Activated CD4-positive, alpha-beta T cell treated with anti-CD3 and anti-CD28 coated beads, Interleukin-2, amount 10 ng/mL, durations not matched to agents 7 days and 5 days (primary cell): ENCODE measurements at regions of chr22 and their contacts with region 1.

Region 1: DNA sequence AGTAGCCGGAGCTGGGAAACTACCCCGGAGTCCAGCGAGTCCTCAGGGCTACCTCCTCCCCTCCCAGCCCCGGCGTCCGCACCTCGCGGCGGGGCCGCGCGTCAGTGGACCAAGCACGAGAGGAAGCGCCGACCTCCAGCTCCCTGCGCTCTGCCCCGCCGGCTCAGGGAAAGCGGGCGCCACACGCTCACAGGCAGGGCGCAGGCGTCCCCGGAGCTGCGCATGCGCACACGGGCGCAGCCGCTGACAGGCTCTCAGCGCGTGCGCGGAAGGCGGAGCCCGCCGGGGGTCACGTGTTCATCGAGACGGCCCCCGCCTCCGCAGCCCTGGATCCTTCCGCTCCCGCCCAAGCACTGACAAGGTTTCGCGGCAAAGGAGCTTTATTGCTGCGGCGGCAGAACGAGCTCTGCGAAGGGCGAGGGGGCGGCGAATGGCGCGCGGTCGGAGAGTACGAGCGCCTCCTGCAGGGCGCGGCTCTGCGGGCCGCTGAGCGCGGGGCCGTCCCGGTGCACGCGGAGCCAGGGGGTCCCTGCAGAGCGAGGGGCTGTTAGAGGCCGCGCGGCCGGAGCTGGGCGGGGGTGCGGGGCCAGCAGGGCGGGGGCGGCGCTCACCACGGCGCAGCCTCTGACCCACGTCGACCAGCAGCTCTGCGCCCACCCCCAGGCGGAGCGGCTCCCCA is at the start of gene SCO2:
- DNase-seq: peak; percentile 97
- H3K4me3 Mint-ChIP-seq: peak within 1 kb of the TSS; percentile 80
- H3K27ac Mint-ChIP-seq: peak within 1 kb of the TSS; percentile 93
- H3K4me1 Mint-ChIP-seq: peaks cover 37% of the 10 kb centered on the region
- H3K27me3 Mint-ChIP-seq: no peaks in the 10 kb centered on the region
- total RNA-seq, gene SCO2: 2.8 to 10.5 TPM

Region 2: DNA sequence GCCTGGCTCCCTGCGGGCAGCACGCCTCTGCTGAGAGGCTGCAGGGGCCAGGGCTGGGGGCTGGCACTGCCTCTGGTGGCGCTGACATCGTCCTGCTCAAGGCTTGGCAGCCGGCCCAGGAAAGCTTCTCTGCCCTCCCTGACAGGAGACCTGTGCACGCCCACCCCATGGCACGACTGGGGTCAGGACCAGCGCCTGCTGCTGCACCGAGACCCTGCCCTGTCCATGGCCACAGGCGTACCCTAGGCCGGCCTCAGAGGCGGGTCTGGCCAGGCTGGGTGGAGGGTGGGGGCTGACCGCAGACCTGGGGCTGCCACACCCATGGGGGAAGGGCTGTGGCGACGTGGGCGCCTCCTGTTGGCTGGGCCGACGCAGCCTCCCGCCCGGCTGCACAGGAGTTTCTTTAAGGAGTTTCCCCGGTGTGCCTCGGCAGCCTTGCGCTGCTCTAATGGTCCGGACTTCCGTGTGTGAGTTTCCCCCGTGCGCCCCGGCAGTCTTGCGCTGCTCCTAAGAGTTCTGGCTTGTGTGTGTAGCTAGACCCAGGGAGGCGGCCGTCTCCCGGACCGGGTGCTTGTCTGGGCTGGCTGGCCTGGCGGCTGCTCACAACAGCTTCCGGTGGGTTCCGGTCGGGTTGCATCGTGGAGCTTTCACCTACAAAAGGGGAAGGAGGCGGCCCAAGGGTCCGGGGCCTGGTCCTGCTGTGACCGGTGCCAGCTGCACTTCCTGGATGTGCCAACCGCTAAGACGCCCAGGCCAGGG is 335.2 kb before region 1 on chr22:
- CTCF ChIA-PET with region 1: interaction called, 10 read pairs
- POLR2A ChIA-PET with region 1: no interaction called
- DNase-seq: peak; percentile 84
- H3K4me3 Mint-ChIP-seq: peak overlapping the region; percentile 81
- H3K27ac Mint-ChIP-seq: peak overlapping the region; percentile 97
- H3K4me1 Mint-ChIP-seq: peaks cover 49% of the 10 kb centered on the region
- H3K27me3 Mint-ChIP-seq: no peaks in the 10 kb centered on the region

Region 3: DNA sequence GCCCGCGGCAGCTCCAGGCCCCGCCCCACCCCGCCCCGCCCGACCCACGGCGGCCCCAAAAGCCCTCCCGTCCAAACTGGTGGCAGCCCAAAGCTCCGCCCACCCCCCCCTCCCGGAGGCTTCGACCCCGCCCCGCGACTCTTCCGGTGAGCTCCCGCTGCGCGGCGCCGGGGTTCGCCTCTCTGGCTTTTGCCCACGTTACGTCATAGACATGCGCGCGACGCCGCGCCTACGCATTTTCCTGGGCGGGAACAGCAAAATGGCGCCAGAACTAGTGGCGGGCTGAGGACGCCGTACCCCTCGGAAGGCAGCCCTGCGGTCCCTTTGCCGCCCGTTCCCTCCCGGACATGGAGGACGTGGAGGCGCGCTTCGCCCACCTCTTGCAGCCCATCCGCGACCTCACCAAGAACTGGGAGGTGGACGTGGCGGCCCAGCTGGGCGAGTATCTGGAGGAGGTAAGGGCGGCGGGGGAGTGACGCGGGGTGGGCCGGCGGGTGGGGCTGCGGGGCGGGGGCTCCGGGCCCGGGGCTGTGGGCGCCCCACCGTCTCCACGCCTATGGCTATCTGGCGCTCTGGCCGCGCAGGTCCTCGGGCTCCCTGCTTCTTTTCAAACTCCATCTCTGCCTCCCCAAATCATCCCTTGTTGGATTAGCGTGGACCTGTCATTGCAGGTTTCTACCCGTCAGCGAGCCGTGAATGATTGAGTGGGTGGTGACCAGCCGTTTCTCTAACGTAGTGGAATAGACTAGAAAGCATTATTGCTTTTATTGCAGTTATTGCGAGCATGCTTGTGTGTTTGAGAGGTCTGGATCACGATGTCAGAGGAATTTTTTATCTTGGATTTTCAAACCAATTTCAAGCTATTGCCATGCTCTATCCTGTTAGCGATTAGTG is 17.3 kb before region 1 on chr22 and contains the start of gene NCAPH2:
- CTCF ChIA-PET with region 1: interaction called, 41 read pairs
- POLR2A ChIA-PET with region 1: interaction called, 29 read pairs
- DNase-seq: peak; percentile 97
- H3K4me3 Mint-ChIP-seq: peak within 1 kb of the TSS; percentile 96
- H3K27ac Mint-ChIP-seq: peak within 1 kb of the TSS; percentile 96
- H3K4me1 Mint-ChIP-seq: peaks cover 26% of the 10 kb centered on the region
- H3K27me3 Mint-ChIP-seq: no peaks in the 10 kb centered on the region
- total RNA-seq, gene NCAPH2: 110 to 133 TPM

Region 4: GRCh38 chr22:50544078-50544745 is 18.7 kb after region 1 on chr22:
- CTCF ChIA-PET with region 1: interaction called, 63 read pairs
- POLR2A ChIA-PET with region 1: interaction called, 15 read pairs
- DNase-seq: peak; percentile 86
- H3K4me3 Mint-ChIP-seq: peak overlapping the region; percentile 62
- H3K27ac Mint-ChIP-seq: peak overlapping the region; percentile 92
- H3K4me1 Mint-ChIP-seq: peaks cover 58% of the 10 kb centered on the region
- H3K27me3 Mint-ChIP-seq: no peaks in the 10 kb centered on the region

Region 5: DNA sequence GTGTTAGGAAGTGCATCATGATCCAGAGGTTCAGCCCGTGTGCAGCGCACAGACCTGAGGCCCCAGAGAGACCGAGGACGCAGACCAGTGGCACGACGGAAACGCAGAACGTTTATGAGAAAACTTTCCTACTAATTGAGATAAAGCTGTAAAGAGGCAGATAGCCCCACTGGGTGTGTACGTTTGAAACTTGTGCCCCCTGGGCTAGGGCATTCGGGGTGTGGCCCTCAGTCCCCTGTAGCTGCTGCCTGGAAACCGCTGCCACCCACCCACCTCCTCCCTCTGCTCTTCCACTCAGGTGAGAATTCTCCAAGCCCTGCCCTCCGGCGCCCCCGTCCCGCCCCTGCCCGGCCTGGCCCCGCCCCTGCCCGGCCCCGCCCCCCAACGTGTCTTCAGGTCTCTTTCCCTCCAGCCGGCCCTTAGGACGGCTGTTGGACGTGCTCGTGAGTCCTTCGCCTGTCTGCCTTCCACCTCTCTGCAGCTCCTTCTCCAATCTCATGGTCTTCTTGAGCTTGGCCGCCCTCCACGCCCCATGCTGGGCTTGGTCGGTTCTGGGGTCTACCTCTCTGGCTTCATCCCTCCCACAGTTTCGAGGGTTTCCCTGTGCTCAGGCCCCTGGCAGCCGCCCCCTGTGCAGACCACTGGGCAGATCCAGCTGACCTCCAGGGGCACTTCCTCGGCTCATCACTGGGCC is 87.1 kb after region 1 on chr22:
- CTCF ChIA-PET with region 1: interaction called, 10 read pairs
- POLR2A ChIA-PET with region 1: no interaction called
- DNase-seq: peak; percentile 22
- H3K4me3 Mint-ChIP-seq: no peak overlapping the region
- H3K27ac Mint-ChIP-seq: no peak overlapping the region
- H3K4me1 Mint-ChIP-seq: peaks cover 12% of the 10 kb centered on the region
- H3K27me3 Mint-ChIP-seq: peaks cover 16% of the 10 kb centered on the region